GM12878 (cell line): ENCODE measurements at regions of chr9 and their contacts with region 1.

Region 1: GRCh38 chr9:110099236-110100095 is 108.5 kb downstream of the C9orf152 start:
- DNase-seq: no peak
- ATAC-seq: no peak
- H3K4me3 ChIP-seq: no peak overlapping the region
- H3K27ac ChIP-seq: no peak overlapping the region
- H3K4me1 ChIP-seq: peaks cover 42% of the 10 kb centered on the region
- H3K27me3 ChIP-seq: no peaks in the 10 kb centered on the region
- CTCF ChIP-seq: no peak
- EP300 ChIP-seq: no peak
- POLR2A ChIP-seq: no peak
- RAD21 ChIP-seq: no peak

Region 2: DNA sequence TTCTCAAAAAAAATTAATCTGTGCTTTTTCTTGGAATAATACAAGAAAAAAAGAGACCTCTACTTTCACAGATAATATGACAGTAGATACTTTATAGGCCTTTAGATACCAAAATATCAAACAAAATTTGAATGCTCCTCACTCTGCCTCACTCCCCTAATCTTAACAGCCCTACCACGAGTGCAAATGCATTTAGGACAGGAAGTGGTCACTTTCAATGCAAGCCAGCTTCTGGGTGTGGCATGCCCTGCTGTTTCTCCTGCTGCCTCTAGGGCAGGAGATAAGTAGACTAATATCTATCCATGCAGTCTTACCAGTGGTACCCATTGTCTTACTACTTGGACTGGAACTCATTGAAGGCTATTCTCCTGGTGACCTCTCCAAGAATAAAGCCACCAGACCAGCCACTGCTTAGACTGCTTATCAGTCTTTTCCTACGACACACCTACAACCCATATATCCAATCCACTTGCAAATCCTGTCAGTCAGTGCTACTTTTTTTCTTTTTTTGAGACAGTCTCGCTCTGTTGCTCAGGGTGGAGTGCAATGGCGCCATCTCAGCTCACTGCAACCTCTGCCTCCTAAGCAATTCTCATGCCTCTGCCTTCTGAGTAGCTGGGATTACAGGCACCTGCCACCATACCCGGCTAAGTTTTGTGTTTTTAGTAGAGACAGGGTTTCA is 955.4 kb before region 1 on chr9:
- CTCF ChIA-PET with region 1: no interaction called
- POLR2A ChIA-PET with region 1: no interaction called
- RAD21 ChIA-PET with region 1: no interaction called
- SMC1A ChIA-PET with region 1: no interaction called
- in situ Hi-C with region 1: no loop called
- intact Hi-C with region 1: no loop called
- DNase-seq: peak; percentile 23
- ATAC-seq: peak; percentile 100
- H3K4me3 ChIP-seq: no peak overlapping the region
- H3K27ac ChIP-seq: no peak overlapping the region
- H3K4me1 ChIP-seq: no peaks in the 10 kb centered on the region
- H3K27me3 ChIP-seq: no peaks in the 10 kb centered on the region
- CTCF ChIP-seq: peak; percentile 12 to 63 (median 43)
- EP300 ChIP-seq: no peak
- POLR2A ChIP-seq: no peak
- RAD21 ChIP-seq: 0 out of 2 replicates have a peak, but pooled peaks have one; percentile 7

Region 3: DNA sequence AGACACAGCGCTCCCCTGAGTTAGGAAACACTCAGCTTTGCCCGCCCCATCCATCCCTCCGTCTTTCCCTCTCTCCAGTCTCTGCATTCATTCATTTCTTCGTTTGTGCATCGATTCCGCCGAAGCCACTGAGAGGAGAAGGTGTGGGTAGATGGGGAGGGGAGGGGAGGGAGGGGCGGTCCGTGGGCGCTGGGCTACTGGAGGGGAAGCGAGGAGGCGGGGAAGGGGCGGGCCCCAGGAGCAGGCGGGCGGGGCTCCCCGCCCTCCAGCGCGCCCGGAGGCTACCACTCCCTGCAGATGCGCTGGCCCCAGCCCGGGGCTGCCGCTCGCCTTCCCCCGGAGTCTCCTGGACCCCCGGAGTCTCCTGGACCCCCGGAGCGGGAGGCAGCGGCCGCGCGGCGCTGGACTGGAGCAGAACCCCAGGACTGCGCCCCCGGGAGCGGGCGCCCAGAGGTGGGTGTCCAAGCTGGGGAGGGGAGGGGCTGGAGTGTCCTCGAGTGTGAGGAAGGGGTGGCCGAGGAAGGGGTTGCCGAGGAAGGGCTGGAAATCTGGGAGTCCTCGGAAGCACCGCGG is 51.0 kb before region 1 on chr9:
- CTCF ChIA-PET with region 1: interaction called, 5 read pairs
- POLR2A ChIA-PET with region 1: interaction called, 7 read pairs
- RAD21 ChIA-PET with region 1: interaction called, 16 read pairs
- SMC1A ChIA-PET with region 1: interaction called, 10 read pairs
- in situ Hi-C with region 1: no loop called
- intact Hi-C with region 1: loop called (anchors 5 kb)
- DNase-seq: peak; percentile 56
- ATAC-seq: peak; percentile 90
- H3K4me3 ChIP-seq: peak overlapping the region; percentile 100
- H3K27ac ChIP-seq: peak overlapping the region; percentile 87
- H3K4me1 ChIP-seq: 0 out of 2 replicates have a peak, but pooled peaks cover 4% of the 10 kb centered on the region
- H3K27me3 ChIP-seq: no peaks in the 10 kb centered on the region; a peak in 1 of 4 replicates
- CTCF ChIP-seq: no peak
- EP300 ChIP-seq: no peak
- POLR2A ChIP-seq: peak; percentile 88
- RAD21 ChIP-seq: no peak

Region 4: DNA sequence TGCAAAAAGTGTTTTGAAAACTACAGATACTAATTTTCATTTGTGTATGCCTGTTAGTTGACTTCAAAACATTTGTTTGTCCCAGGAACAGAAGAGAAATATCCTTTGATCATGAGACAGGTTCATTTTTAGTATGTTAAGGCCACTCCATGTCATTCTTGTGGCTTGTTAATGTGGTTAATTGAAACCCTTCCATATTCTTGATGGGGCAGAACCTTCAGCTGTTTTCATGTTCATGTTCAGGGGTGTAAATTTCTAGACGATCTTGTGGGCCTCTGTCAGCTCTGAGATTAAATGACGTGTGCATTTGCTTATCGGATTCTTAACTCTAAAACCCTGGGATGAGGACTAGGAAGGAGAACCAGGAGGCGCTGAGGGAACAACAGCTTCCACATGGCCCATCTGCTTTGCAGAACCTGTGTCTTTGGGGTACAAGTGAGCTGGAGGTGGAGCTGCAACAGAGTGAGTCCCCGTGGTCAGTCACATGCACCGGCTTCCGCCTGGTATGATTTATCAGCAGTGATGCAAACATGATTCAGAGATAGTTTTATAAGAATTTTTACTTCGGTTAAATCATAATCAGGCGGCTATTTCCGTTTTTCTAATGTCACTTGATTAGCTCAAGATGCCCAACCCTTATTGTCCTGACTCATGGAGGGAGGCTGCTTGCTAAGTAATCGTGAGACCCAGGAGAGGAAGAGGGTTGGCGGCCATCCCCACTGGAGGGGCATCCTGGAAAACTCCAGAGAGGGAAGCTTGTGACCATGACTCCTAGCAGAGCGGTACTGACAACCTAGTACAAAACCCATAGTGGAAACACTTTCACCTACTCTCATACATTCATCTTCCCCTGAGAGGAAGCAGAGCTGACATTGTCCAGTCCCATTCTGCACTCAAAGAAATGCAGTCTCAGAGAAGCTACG is 29.9 kb before region 1 on chr9:
- CTCF ChIA-PET with region 1: interaction called, 3 read pairs
- POLR2A ChIA-PET with region 1: interaction called, 4 read pairs
- RAD21 ChIA-PET with region 1: interaction called, 9 read pairs
- SMC1A ChIA-PET with region 1: interaction called, 11 read pairs
- in situ Hi-C with region 1: no loop called
- intact Hi-C with region 1: no loop called
- DNase-seq: no peak
- ATAC-seq: no peak
- H3K4me3 ChIP-seq: no peak overlapping the region
- H3K27ac ChIP-seq: no peak overlapping the region
- H3K4me1 ChIP-seq: peaks cover 29% of the 10 kb centered on the region
- H3K27me3 ChIP-seq: no peaks in the 10 kb centered on the region
- CTCF ChIP-seq: no peak
- EP300 ChIP-seq: no peak
- POLR2A ChIP-seq: no peak
- RAD21 ChIP-seq: no peak

Region 5: DNA sequence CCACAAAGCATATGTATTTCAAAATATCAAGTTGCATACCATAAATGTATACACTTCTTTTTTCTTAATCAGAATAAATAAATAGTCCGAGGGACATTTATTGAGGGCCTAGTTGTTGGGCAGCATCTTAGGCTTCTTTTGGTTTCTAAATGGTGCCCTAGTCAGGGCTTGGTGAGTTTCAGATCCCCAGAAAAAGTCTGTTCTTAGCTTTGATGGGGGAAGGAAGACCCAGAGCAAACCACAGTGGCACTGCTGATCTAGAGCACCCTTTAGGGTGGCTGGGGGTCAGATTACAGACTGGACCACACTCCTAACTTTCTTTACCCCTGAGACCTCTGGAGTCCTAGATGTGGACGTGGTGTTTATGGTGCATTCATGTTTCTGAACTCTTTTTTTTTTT is 10.7 kb after region 1 on chr9:
- CTCF ChIA-PET with region 1: interaction called, 10 read pairs
- POLR2A ChIA-PET with region 1: interaction called, 9 read pairs
- RAD21 ChIA-PET with region 1: interaction called, 7 read pairs
- SMC1A ChIA-PET with region 1: interaction called, 63 read pairs
- in situ Hi-C with region 1: no loop called
- intact Hi-C with region 1: no loop called
- DNase-seq: peak; percentile 51
- ATAC-seq: peak; percentile 96
- H3K4me3 ChIP-seq: no peak overlapping the region
- H3K27ac ChIP-seq: no peak overlapping the region
- H3K4me1 ChIP-seq: peaks cover 27% of the 10 kb centered on the region
- H3K27me3 ChIP-seq: no peaks in the 10 kb centered on the region
- CTCF ChIP-seq: no peak
- EP300 ChIP-seq: no peak
- POLR2A ChIP-seq: no peak
- RAD21 ChIP-seq: no peak

Region 6: DNA sequence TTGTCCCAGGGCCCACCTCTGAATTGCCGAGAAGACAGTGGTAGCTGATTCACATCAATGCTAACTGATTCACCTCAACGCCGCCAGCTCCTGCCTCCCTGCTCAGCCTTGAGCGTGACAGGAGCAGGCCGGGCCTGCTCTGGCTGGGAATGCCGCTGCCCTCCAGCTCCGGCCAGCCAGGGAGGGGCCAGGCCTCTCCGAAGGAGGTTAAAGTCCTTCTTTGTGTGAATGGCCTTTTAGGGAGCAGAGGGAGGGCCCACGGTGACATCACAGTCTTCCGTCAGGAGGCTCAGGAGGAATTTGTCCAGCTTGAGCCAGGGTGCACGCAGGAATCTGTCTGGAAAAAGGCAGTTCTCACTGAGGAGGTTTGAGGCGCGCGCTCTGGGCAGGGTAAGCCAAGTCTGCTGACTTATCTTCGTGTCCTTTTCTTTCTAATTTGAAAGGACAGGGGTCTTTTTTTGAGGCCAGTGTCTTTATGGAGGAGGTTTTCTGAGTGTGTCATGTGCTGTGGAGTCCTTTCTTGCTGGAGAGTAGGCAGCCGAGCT is 25.8 kb after region 1 on chr9:
- CTCF ChIA-PET with region 1: interaction called, 30 read pairs
- POLR2A ChIA-PET with region 1: interaction called, 149 read pairs
- RAD21 ChIA-PET with region 1: interaction called, 340 read pairs
- SMC1A ChIA-PET with region 1: interaction called, 397 read pairs
- in situ Hi-C with region 1: no loop called
- intact Hi-C with region 1: loop called (anchors 2 kb)
- DNase-seq: no peak
- ATAC-seq: no peak
- H3K4me3 ChIP-seq: no peak overlapping the region
- H3K27ac ChIP-seq: peak overlapping the region; percentile 29
- H3K4me1 ChIP-seq: peaks cover 58% of the 10 kb centered on the region
- H3K27me3 ChIP-seq: no peaks in the 10 kb centered on the region
- CTCF ChIP-seq: no peak
- EP300 ChIP-seq: no peak
- POLR2A ChIP-seq: no peak
- RAD21 ChIP-seq: no peak

Region 7: DNA sequence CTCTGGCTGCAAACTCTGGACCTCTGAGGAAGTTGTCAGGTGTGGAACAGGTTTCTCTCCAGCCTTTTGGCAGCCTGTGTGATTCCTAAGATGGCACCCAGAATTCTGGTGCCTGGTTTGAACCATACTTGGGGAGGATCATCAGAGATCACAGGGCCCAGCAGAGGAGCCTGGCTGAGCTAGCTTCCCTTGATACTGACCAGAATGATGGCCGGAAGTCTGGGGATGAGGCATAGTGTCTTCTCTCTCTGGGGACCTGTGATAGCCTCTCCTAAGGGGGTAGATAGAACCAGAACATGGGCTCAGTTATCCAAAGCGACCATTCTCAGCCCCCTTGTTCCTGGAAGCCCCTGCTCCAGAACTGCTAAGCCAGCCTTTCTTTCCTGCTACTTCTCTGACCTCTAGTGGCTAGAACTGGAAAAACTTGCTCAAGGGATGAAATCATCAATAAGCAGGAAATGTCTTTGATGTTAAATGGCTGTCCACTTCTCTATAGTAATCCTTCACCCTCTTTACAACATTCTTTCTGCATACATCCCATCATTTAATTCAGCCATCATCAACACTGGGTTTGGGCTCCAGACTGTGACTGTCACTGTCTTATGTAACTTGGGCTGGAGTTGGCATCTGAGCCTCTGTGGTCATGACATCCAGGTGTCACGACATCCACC is 53.4 kb after region 1 on chr9:
- CTCF ChIA-PET with region 1: interaction called, 16 read pairs
- POLR2A ChIA-PET with region 1: interaction called, 30 read pairs
- RAD21 ChIA-PET with region 1: interaction called, 282 read pairs
- SMC1A ChIA-PET with region 1: interaction called, 122 read pairs
- in situ Hi-C with region 1: no loop called
- intact Hi-C with region 1: loop called (anchors 1 kb)
- DNase-seq: no peak
- ATAC-seq: peak; percentile 23
- H3K4me3 ChIP-seq: 0 out of 2 replicates have a peak overlapping the region, but pooled peaks have one; percentile 17
- H3K27ac ChIP-seq: no peak overlapping the region
- H3K4me1 ChIP-seq: peaks cover 57% of the 10 kb centered on the region
- H3K27me3 ChIP-seq: no peaks in the 10 kb centered on the region
- CTCF ChIP-seq: peak; percentile 68 to 83 (median 78); a peak in 5 of 6 replicates
- EP300 ChIP-seq: no peak
- POLR2A ChIP-seq: no peak; the same call in none of the 2 replicates
- RAD21 ChIP-seq: peak; percentile 96